OCI-LY7 (cell line): ENCODE measurements at regions of chr1 and their contacts with region 1.

Region 1: GRCh38 chr1:202571347-202572339 is 138.6 kb downstream of the SYT2 start:
- DNase-seq: peak; percentile 59
- H3K4me3 ChIP-seq: no peak overlapping the region
- H3K27ac ChIP-seq: no peak overlapping the region
- H3K4me1 ChIP-seq: peaks cover 1% of the 10 kb centered on the region
- CTCF ChIP-seq: peak; percentile 95

Region 2: GRCh38 chr1:202501281-202501680 is 70.4 kb before region 1 on chr1:
- CTCF ChIA-PET with region 1: no interaction called
- POLR2A ChIA-PET with region 1: interaction called, 3 read pairs
- intact Hi-C with region 1: loop called (anchors 2 kb)
- DNase-seq: peak; percentile 16
- H3K4me3 ChIP-seq: no peak overlapping the region
- H3K27ac ChIP-seq: no peak overlapping the region
- H3K4me1 ChIP-seq: no peaks in the 10 kb centered on the region
- CTCF ChIP-seq: peak; percentile 72

Region 3: DNA sequence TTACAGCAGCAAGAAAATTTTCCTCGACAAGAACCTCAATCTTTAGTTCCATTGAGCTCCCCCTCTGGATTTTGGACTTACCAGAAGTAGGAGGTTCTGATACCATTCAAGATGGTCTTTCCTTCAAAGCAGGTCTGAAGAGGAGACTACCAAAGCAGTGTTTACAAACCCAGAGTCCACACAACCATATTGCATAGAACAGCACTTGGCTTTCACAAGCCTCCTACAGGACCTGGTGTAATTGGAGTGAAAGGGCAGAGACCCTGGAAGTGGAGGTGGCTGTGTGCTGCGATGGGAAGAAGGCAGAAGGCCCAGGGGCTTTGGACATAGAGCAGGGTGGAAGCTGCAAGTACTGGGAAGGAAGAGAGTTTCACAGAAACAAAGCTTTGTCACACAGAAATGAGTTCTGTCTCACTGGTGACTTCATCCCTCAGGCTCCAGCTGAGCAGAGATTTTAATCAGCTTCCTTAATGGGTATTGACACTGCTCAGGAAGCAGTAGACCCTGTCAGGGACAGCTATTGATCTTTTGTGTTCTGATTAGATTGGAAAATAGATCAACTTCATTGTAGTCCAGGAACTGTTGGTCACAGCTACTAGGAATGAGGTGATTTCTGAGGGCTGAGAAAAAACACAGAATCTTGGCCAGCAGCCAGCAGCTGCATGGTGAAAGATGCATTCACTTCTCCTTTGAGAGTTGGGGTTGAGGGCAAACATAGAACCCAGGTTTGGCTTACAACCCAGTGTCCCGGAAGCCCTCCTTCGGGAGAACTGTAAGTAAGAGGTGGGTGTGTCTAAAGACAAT is 14.6 kb after region 1 on chr1:
- CTCF ChIA-PET with region 1: no interaction called
- POLR2A ChIA-PET with region 1: interaction called, 10 read pairs
- intact Hi-C with region 1: no loop called
- DNase-seq: peak; percentile 21
- H3K4me3 ChIP-seq: no peak overlapping the region
- H3K27ac ChIP-seq: no peak overlapping the region
- H3K4me1 ChIP-seq: peaks cover 10% of the 10 kb centered on the region
- CTCF ChIP-seq: no peak